Posterior vena cava (tissue), 2 donors: ENCODE measurements at regions of chr4 and their contacts with region 1.

Region 1: DNA sequence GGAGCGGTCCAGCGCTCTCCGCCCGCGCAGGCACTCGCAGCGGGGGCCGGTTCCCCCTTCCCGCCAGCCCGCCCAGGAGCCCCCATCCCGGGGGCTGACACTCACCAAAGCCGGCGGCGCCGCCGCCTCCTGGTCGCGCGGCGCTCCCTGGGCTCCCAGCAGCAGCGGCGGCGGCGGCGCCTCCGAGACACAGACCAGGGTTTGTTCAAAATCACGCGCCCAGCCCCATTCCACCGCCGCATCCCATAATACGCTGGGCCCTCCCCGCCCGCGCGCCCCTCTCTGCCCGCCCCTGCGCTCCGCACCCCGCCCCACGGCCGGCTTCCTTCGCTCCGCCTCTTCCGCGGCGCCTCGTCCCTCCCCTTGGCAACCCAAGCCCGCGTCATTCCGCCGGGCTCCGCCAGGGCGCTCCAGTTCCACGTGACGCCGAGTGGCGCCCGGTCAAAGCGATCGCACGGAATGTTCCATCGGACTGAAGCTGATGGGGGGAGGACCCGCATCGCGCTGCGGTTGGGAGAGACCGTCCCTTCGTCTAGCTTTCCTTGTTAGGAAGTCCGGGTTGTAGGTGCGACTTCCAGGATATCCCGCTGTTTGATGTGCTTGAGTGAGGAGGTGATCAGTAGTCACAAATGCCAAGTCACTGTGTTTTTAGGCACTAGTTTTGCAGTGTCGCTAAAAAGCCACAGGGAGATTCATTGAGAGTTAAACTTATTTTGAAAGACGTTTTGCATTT is 2.2 kb upstream of the LIN54 start:
- DNase-seq: peak; percentile 99

Region 2: DNA sequence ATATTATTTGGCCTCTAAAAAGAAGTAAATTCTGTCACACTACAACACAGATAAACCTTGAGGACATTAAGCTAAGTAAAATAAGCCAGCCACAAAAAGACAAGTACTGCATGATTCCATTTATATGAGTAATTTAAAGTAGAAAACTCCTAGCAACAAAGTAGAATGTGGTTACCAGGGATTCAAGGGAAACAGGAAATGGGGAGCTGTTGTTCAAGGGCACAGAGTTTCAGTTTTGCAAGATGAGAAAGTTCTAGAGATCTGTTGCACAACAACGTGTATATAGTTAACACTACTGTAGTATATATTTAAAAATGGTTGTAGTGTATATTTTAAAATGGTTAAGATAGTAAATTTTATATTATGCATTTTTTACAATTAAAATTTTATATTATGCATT is 147.3 kb before region 1 on chr4:
- intact Hi-C with region 1: no loop called
- DNase-seq: no peak

Region 3: DNA sequence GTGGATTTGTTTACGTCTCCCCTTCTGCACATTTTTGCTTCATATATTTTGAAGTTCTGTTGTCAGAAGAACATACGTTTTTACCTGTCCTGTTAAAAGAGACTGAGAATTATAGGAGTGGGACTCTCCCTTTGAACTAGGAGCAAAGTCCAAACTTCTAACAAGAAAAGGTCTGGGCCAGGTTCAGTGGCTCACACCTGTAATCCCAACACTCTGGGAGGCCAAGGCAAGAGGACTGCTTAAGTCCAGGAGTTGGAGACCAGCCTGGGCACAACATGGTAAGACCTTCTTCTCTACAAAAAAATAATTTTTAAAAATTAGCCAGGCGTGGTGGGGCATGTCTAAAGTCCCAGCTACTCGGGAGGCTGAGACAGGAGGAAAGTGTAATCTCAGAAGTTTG is 18.0 kb before region 1 on chr4:
- intact Hi-C with region 1: loop called in 1 of 2 experiments (anchors 1 kb)
- DNase-seq: no peak